CD8-positive, alpha-beta T cell (primary cell): ENCODE measurements at regions of chr13 and their contacts with region 1.

Region 1: GRCh38 chr13:29961036-29961670 is 110.7 kb upstream of the UBL3 start:
- DNase-seq: no peak
- ATAC-seq: no peak
- H3K4me3 ChIP-seq: no peak overlapping the region
- H3K4me3 Mint-ChIP-seq: no peak overlapping the region
- H3K27ac ChIP-seq: no peak overlapping the region
- H3K27ac Mint-ChIP-seq: peak overlapping the region; percentile 77
- H3K4me1 ChIP-seq: peaks cover 17% of the 10 kb centered on the region
- H3K4me1 Mint-ChIP-seq: peaks cover 41% of the 10 kb centered on the region
- H3K27me3 ChIP-seq: no peaks in the 10 kb centered on the region
- H3K27me3 Mint-ChIP-seq: no peaks in the 10 kb centered on the region
- CTCF ChIP-seq: no peak

Region 2: DNA sequence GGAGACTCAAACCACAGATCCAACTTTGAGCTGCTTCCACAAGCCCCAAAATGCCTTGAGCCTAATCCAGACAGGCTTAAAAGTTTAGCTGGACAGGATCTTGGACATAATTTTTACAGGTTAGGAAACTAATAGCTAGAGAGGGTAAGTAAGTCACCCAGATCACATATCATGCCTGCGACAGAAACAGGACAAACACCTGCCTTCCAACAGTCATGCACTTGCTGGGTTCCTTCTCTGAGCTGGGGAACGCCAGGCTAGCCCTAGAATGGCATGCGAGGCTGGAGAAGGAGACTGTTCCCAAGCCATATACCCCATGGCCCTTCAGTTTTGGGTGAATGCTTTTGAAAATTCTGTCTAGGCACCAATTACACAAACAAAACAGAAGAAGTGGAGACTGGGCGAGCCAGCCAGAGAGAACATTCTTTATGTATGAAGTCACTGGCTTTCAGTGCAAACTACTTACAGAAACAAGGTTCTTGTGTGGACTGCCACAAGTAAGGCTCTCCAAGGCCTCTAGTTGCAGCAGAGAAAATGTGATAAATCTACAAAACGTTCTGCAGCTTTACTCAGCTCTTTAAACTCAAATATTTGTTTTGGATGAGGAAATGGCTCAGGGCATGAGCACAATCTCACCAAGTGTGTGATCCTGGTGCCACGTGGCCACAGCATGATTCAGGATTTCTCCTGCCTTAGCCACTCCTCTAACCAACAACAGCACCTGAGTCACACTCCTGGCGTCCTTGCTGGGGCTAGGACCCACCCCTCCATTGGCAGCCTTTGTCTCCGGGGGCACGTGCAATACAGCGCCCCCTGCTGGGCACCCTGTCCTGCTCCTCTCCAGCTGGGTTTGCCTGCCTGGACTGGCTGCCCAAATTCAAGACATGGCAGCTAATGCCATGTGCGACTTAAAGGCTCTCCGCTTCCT is 37.3 kb before region 1 on chr13:
- CTCF ChIA-PET with region 1: no interaction called
- POLR2A ChIA-PET with region 1: interaction called, 3 read pairs
- intact Hi-C with region 1: loop called in 1 of 2 experiments (anchors 5 kb)
- DNase-seq: peak in 8 of 9 experiments; percentile 30 to 74 (median 61)
- ATAC-seq: peak; percentile 80
- H3K4me3 ChIP-seq: no peak overlapping the region
- H3K4me3 Mint-ChIP-seq: no peak overlapping the region
- H3K27ac ChIP-seq: no peak overlapping the region
- H3K27ac Mint-ChIP-seq: no peak overlapping the region
- H3K4me1 ChIP-seq: no peaks in the 10 kb centered on the region
- H3K4me1 Mint-ChIP-seq: peaks cover 17% of the 10 kb centered on the region
- H3K27me3 ChIP-seq: no peaks in the 10 kb centered on the region
- H3K27me3 Mint-ChIP-seq: no peaks in the 10 kb centered on the region
- CTCF ChIP-seq: peak; percentile 64